ENCODE measurements at regions of chr16 and their contacts with region 1.

Region 1: GRCh38 chr16:83070416-83071209 is 443.8 kb downstream of the CDH13 start:
- DNase-seq: no peak
- H3K4me3 ChIP-seq: no peak overlapping the region
- H3K27ac ChIP-seq: no peak overlapping the region
- H3K4me1 ChIP-seq: no peaks in the 10 kb centered on the region
- H3K27me3 ChIP-seq: no peaks in the 10 kb centered on the region
- CTCF ChIP-seq: no peak

Region 2: GRCh38 chr16:83137326-83137770 is 66.7 kb after region 1 on chr16:
- CTCF ChIA-PET with region 1: no interaction called
- dilution Hi-C with region 1: loop called (anchors 10 kb)
- in situ Hi-C with region 1: no loop called
- intact Hi-C with region 1: no loop called
- DNase-seq: peak; percentile 58
- H3K4me3 ChIP-seq: peak overlapping the region; percentile 13 to 33 (median 19)
- H3K27ac ChIP-seq: peak overlapping the region; percentile 10
- H3K4me1 ChIP-seq: peaks cover 5% of the 10 kb centered on the region
- H3K27me3 ChIP-seq: no peaks in the 10 kb centered on the region
- CTCF ChIP-seq: no peak

Region 3: GRCh38 chr16:83171396-83171795 is 100.8 kb after region 1 on chr16:
- CTCF ChIA-PET with region 1: no interaction called
- dilution Hi-C with region 1: no loop called
- in situ Hi-C with region 1: no loop called
- intact Hi-C with region 1: no loop called
- DNase-seq: no peak
- H3K4me3 ChIP-seq: no peak overlapping the region
- H3K27ac ChIP-seq: no peak overlapping the region
- H3K4me1 ChIP-seq: no peaks in the 10 kb centered on the region
- H3K27me3 ChIP-seq: no peaks in the 10 kb centered on the region
- CTCF ChIP-seq: no peak